ENCODE measurements at regions of chr1 and their contacts with region 1.

Region 1: GRCh38 chr1:32716312-32717148 is 14.0 kb upstream of the SYNC start:
- DNase-seq: peak; percentile 65 to 68
- ATAC-seq: peak; percentile 81 to 83
- H3K4me3 ChIP-seq: 0 out of 3 replicates have a peak overlapping the region, but pooled peaks have one; percentile 17
- H3K27ac ChIP-seq: peak overlapping the region; percentile 70 to 87
- H3K4me1 ChIP-seq: peaks cover 30% of the 10 kb centered on the region
- CTCF ChIP-seq: no peak
- EP300 ChIP-seq: no peak
- POLR2A ChIP-seq: 0 out of 2 replicates have a peak, but pooled peaks have one; percentile 16
- RAD21 ChIP-seq: no peak

Region 2: GRCh38 chr1:31910933-31911332 is 805.6 kb before region 1 on chr1:
- CTCF ChIA-PET with region 1: no interaction called
- POLR2A ChIA-PET with region 1: no interaction called
- DNase-seq: no peak
- ATAC-seq: no peak; a peak in 1 of 6 replicates
- H3K4me3 ChIP-seq: no peak overlapping the region
- H3K27ac ChIP-seq: peak overlapping the region; percentile 14 to 38; a peak in 1 of 6 replicates
- H3K4me1 ChIP-seq: peaks cover 51% of the 10 kb centered on the region
- CTCF ChIP-seq: no peak
- EP300 ChIP-seq: no peak
- POLR2A ChIP-seq: no peak
- RAD21 ChIP-seq: no peak

Region 3: DNA sequence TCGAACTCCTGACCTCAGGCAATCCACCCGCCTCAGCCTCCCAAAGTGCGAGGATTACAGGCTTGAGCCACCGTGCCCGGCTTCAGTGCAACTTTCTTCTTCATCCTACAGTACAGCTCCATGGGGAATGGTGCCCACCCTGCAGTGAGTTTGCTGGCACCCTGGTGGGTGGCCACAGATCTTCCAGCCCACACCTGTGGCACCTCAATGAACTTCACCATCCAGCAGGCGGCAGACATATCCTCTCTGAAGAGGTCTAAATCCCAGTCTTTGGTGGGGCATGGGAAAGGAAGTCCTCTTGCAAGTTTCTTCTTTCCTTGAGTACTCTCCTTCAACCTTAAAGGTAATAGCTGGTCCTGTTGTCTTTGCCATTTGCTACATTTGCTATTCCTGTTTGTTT is 195.4 kb before region 1 on chr1:
- CTCF ChIA-PET with region 1: interaction called, 12 read pairs
- POLR2A ChIA-PET with region 1: interaction called, 3 read pairs
- DNase-seq: peak in 1 of 2 experiments; percentile 33
- ATAC-seq: peak; percentile 43 to 53; a peak in 3 of 6 replicates
- H3K4me3 ChIP-seq: peak overlapping the region; percentile 51; the same call in 2 of the 3 replicates
- H3K27ac ChIP-seq: peak overlapping the region; percentile 77 to 88
- H3K4me1 ChIP-seq: no peaks in the 10 kb centered on the region
- CTCF ChIP-seq: no peak
- EP300 ChIP-seq: no peak
- POLR2A ChIP-seq: no peak
- RAD21 ChIP-seq: no peak

Region 4: DNA sequence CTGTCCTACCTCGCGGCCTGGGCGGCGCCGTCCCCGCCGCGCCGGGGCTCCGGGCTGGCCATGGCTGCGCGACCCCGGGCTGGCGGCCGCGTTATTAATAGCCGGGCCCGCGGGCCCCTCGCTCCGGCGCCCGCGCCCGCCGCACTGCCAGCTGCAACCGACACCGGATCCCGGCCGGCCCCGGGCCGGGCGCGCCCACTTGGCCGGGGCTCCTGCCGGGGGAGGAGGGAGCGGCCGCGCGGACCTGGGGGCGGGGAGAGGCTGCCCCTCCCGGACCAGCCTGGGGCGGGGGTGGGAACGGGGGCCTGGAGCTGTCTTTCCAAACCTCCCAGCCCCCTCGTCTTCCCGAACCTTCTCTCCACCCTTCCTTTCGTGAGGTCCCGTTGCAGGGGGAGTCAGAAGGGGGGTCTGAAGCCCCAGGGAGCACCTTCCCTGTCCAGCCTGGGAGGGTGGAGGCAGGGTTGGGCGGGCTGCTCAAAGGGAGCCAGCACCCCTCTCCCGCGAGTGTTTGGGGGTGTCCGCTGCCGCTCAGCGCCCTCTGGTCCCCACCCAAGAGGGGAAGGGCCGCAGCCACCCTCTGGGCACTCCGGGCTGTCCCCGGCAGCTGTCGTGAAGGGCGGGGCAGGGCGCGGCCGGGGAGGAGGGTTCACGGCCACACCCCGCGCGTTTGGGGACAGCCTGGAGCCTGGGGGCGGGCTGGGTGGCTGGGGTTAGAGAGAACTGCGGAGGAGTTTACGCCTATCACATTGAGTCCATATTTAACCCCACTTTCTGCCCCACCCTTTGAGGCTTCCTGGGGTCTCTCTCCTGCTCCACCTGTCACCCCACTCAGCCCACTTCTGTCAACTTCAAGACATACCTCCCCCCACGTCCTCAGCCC is 13.7 kb before region 1 on chr1 and contains the start of gene SYNC:
- CTCF ChIA-PET with region 1: interaction called, 29 read pairs
- POLR2A ChIA-PET with region 1: interaction called, 4 read pairs
- DNase-seq: peak; percentile 56 to 69
- ATAC-seq: peak; percentile 62 to 74
- H3K4me3 ChIP-seq: peak within 1 kb of the TSS; percentile 64
- H3K27ac ChIP-seq: peak within 1 kb of the TSS; percentile 92 to 100
- H3K4me1 ChIP-seq: peaks cover 43% of the 10 kb centered on the region
- CTCF ChIP-seq: no peak
- EP300 ChIP-seq: no peak
- POLR2A ChIP-seq: peak; percentile 7; the same call in 1 of the 2 replicates
- RAD21 ChIP-seq: no peak
- polyA plus RNA-seq, gene SYNC: 5.5 and 7.7 TPM in 2 replicates

Region 5: GRCh38 chr1:32741413-32742198 is 25.1 kb after region 1 on chr1:
- CTCF ChIA-PET with region 1: interaction called, 25 read pairs
- POLR2A ChIA-PET with region 1: interaction called, 3 read pairs
- DNase-seq: peak in 1 of 2 experiments; percentile 69
- ATAC-seq: peak; percentile 70 to 76
- H3K4me3 ChIP-seq: peak overlapping the region; percentile 82
- H3K27ac ChIP-seq: peak overlapping the region; percentile 90 to 100
- H3K4me1 ChIP-seq: peaks cover 46% of the 10 kb centered on the region
- CTCF ChIP-seq: peak; percentile 52
- EP300 ChIP-seq: no peak
- POLR2A ChIP-seq: no peak
- RAD21 ChIP-seq: peak in 1 of 2 experiments; percentile 48; a peak in 3 of 5 replicates

Region 6: GRCh38 chr1:32773018-32773763 is 56.7 kb after region 1 on chr1:
- CTCF ChIA-PET with region 1: interaction called, 383 read pairs
- POLR2A ChIA-PET with region 1: interaction called, 9 read pairs
- DNase-seq: peak; percentile 76 to 82
- ATAC-seq: peak; percentile 59 to 83
- H3K4me3 ChIP-seq: no peak overlapping the region
- H3K27ac ChIP-seq: peak overlapping the region; percentile 28 to 99; a peak in 5 of 6 replicates
- H3K4me1 ChIP-seq: peaks cover 80% of the 10 kb centered on the region
- CTCF ChIP-seq: peak; percentile 88
- EP300 ChIP-seq: no peak
- POLR2A ChIP-seq: no peak
- RAD21 ChIP-seq: peak; percentile 87 to 88

Region 7: GRCh38 chr1:32791881-32792280 is 75.4 kb after region 1 on chr1:
- CTCF ChIA-PET with region 1: interaction called, 22 read pairs
- POLR2A ChIA-PET with region 1: no interaction called
- DNase-seq: peak; percentile 29 to 30
- ATAC-seq: peak; percentile 84 to 90; a peak in 5 of 6 replicates
- H3K4me3 ChIP-seq: no peak overlapping the region
- H3K27ac ChIP-seq: peak overlapping the region in 1 of 2 experiments; percentile 71; a peak in 3 of 6 replicates
- H3K4me1 ChIP-seq: peaks cover 32% of the 10 kb centered on the region
- CTCF ChIP-seq: no peak
- EP300 ChIP-seq: no peak
- POLR2A ChIP-seq: no peak
- RAD21 ChIP-seq: no peak

Region 8: GRCh38 chr1:32813941-32814739 is 97.6 kb after region 1 on chr1:
- CTCF ChIA-PET with region 1: no interaction called
- POLR2A ChIA-PET with region 1: no interaction called
- DNase-seq: peak in 1 of 2 experiments; percentile 7
- ATAC-seq: no peak
- H3K4me3 ChIP-seq: no peak overlapping the region
- H3K27ac ChIP-seq: no peak overlapping the region
- H3K4me1 ChIP-seq: peaks cover 28% of the 10 kb centered on the region
- CTCF ChIP-seq: no peak
- EP300 ChIP-seq: no peak
- POLR2A ChIP-seq: no peak
- RAD21 ChIP-seq: no peak

Measured in A549 (cell line).